PC-3 (cell line): ENCODE measurements at regions of chr9 and their contacts with region 1.

Region 1: GRCh38 chr9:34869390-34869789 is 88.7 kb upstream of the PHF24 start:
- DNase-seq: peak; percentile 34
- ATAC-seq: no peak
- H3K4me3 ChIP-seq: no peak overlapping the region
- H3K27ac ChIP-seq: no peak overlapping the region
- H3K4me1 ChIP-seq: no peaks in the 10 kb centered on the region
- H3K27me3 ChIP-seq: 0 out of 2 replicates have a peak, but pooled peaks cover 4% of the 10 kb centered on the region
- CTCF ChIP-seq: peak; percentile 51

Region 2: GRCh38 chr9:34759432-34760134 is 109.8 kb before region 1 on chr9:
- CTCF ChIA-PET with region 1: interaction called, 3 read pairs
- POLR2A ChIA-PET with region 1: no interaction called
- intact Hi-C with region 1: loop called (anchors 2 kb)
- DNase-seq: no peak
- ATAC-seq: no peak
- H3K4me3 ChIP-seq: no peak overlapping the region
- H3K27ac ChIP-seq: no peak overlapping the region
- H3K4me1 ChIP-seq: no peaks in the 10 kb centered on the region
- H3K27me3 ChIP-seq: peaks cover 3% of the 10 kb centered on the region; the same call in 1 of the 2 replicates
- CTCF ChIP-seq: no peak